BJ (cell line): ENCODE measurements at regions of chr1 and their contacts with region 1.

Region 1: DNA sequence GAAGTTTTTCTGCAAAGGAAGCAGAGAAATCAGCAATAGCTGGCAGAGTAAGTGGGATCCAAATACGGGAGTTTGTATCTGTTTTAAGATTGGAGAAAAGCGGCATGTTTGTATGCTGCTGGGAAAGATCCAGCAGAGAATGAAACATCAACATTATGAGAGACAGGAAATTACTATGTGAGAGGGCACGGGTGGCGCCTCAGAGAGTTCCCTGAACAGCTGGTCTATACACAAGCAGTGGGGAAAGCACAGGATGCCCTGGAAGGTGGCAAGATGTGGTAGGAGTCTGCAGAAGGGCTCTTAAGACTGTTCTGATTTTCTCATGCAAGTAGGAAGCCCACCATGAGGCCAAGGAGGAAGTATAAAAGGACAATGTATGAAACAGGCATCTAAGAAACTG is 130.4 kb downstream of the RERE start:
- DNase-seq: no peak
- H3K4me3 ChIP-seq: no peak overlapping the region
- H3K27me3 ChIP-seq: no peaks in the 10 kb centered on the region
- CTCF ChIP-seq: no peak

Region 2: GRCh38 chr1:8671306-8671917 is 15.6 kb before region 1 on chr1:
- CTCF ChIA-PET with region 1: interaction called, 20 read pairs
- POLR2A ChIA-PET with region 1: no interaction called
- DNase-seq: no peak
- H3K4me3 ChIP-seq: no peak overlapping the region
- H3K27me3 ChIP-seq: no peaks in the 10 kb centered on the region
- CTCF ChIP-seq: peak; percentile 85